ENCODE measurements at regions of chr15 and their contacts with region 1.

Region 1: DNA sequence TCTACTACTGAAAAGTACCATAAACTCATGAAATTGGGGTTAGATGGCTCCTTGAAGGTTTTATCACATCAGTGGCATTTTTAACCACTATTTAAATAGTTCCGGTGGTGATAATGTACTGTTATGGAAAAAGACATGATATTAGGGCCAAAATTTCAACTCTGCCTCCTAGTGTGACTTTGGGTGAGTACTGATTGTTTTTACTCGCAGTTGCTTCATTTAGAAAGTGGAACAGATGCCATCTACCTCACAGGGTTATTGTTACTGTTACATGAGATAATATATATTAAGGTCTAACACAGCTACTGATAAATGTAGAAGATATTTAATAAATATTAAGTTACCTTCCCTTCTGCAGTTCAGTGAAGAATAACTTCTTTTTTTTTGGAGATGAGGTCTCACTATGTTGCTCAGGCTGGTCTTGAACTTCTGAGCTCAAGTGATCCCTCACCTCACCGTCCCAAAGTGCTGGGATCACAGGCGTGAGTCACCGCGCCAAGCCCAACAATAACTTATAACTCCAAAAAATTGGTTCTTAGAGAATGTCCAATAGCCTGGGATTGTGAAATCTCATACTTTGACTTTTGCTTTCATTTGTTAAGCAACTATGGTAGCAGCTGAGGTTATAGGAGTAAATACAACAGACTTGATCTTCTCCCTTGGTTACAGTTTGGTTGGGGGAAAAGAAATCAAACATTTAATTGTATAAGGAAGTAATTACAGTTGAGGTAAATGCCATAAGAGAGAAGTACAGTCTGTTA is 48.3 kb downstream of the MEF2A start:
- DNase-seq: no peak
- ATAC-seq: peak; percentile 70
- H3K4me3 ChIP-seq: no peak overlapping the region
- H3K27ac ChIP-seq: no peak overlapping the region
- H3K4me1 ChIP-seq: peaks cover 2 to 3% of the 10 kb centered on the region in 2 donors
- H3K27me3 ChIP-seq: no peaks in the 10 kb centered on the region

Region 2: GRCh38 chr15:99571299-99571698 is 42.8 kb before region 1 on chr15:
- intact Hi-C with region 1: loop called in 1 of 2 experiments (anchors 5 kb)
- DNase-seq: no peak
- ATAC-seq: no peak
- H3K4me3 ChIP-seq: no peak overlapping the region
- H3K27ac ChIP-seq: peak overlapping the region in 1 of 2 donors; percentile 28
- H3K4me1 ChIP-seq: peaks cover 2 to 7% of the 10 kb centered on the region in 2 donors
- H3K27me3 ChIP-seq: no peaks in the 10 kb centered on the region

Region 3: GRCh38 chr15:99582508-99582960 is 31.5 kb before region 1 on chr15:
- intact Hi-C with region 1: loop called in 1 of 2 experiments (anchors 5 kb)
- DNase-seq: no peak
- ATAC-seq: no peak
- H3K4me3 ChIP-seq: no peak overlapping the region
- H3K27ac ChIP-seq: no peak overlapping the region
- H3K4me1 ChIP-seq: peaks cover 2% of the 10 kb centered on the region in 2 donors
- H3K27me3 ChIP-seq: no peaks in the 10 kb centered on the region

Region 4: DNA sequence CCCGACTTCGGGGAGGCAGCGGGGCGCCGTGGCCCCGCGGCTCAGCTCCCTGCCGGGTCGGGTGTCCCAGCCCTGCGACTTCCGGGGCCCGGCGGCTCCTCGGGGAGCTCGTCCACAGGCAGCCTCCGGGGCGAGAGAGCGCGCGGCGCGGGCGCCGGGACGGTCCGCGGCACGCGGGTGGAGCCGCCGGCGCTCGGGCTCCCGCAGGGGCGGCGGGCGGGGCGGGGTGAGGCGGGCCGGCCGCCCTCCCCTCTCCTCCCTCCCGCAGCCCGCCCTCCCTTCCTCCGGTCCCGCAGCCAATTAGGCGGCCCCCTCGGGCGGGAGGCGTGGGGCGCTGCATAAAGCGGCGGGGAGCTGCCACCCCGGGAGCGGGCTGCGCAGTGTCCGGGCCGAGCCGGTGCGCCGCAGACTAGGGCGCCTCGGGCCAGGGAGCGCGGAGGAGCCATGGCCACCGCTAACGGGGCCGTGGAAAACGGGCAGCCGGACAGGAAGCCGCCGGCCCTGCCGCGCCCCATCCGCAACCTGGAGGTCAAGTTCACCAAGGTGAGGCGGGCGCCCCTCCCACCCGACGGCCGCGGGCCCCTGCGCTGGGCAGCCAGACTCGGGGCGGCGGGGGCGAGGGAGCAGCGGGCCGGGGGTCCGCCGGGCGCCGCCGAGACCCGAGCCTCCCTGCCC is 1265.5 kb after region 1 on chr15 and contains the start of gene ALDH1A3:
- intact Hi-C with region 1: loop called in 1 of 2 experiments (anchors 10 kb)
- DNase-seq: no peak
- ATAC-seq: no peak
- H3K4me3 ChIP-seq: peak within 1 kb of the TSS; percentile 15 to 58
- H3K27ac ChIP-seq: no peak within 1 kb of the TSS
- H3K4me1 ChIP-seq: no peaks in the 10 kb centered on the region
- H3K27me3 ChIP-seq: peaks cover 0 to 2% of the 10 kb centered on the region in 2 donors
- total RNA-seq, gene ALDH1A3: 7.0 to 19.0 TPM

Measured in aorta (tissue), 5 donors.